Activated CD4-positive, alpha-beta memory T cell treated with anti-CD3 and anti-CD28 coated beads for 36 hours (primary cell): ENCODE measurements at regions of chr3 and their contacts with region 1.

Region 1: GRCh38 chr3:27632431-27633223 is 89.5 kb downstream of the EOMES start:
- DNase-seq: peak; percentile 56
- H3K4me3 Mint-ChIP-seq: peak overlapping the region; percentile 83
- H3K27ac Mint-ChIP-seq: peak overlapping the region; percentile 85
- H3K4me1 Mint-ChIP-seq: peaks cover 44% of the 10 kb centered on the region
- H3K27me3 Mint-ChIP-seq: no peaks in the 10 kb centered on the region

Region 2: GRCh38 chr3:27454914-27455313 is 177.7 kb before region 1 on chr3:
- CTCF ChIA-PET with region 1: no interaction called
- POLR2A ChIA-PET with region 1: no interaction called
- intact Hi-C with region 1: loop called (anchors 5 kb)
- DNase-seq: no peak
- H3K4me3 Mint-ChIP-seq: peak overlapping the region; percentile 10
- H3K27ac Mint-ChIP-seq: peak overlapping the region; percentile 58
- H3K4me1 Mint-ChIP-seq: peaks cover 62% of the 10 kb centered on the region
- H3K27me3 Mint-ChIP-seq: no peaks in the 10 kb centered on the region

Region 3: GRCh38 chr3:27590437-27591298 is 42.0 kb before region 1 on chr3:
- CTCF ChIA-PET with region 1: interaction called, 15 read pairs
- POLR2A ChIA-PET with region 1: interaction called, 5 read pairs
- intact Hi-C with region 1: loop called (anchors 1 kb)
- DNase-seq: peak; percentile 13
- H3K4me3 Mint-ChIP-seq: no peak overlapping the region
- H3K27ac Mint-ChIP-seq: peak overlapping the region; percentile 62
- H3K4me1 Mint-ChIP-seq: peaks cover 25% of the 10 kb centered on the region
- H3K27me3 Mint-ChIP-seq: no peaks in the 10 kb centered on the region

Region 4: GRCh38 chr3:27659279-27660021 is 26.8 kb after region 1 on chr3:
- CTCF ChIA-PET with region 1: interaction called, 4 read pairs
- POLR2A ChIA-PET with region 1: no interaction called
- intact Hi-C with region 1: loop called (anchors 1 kb)
- DNase-seq: peak; percentile 56
- H3K4me3 Mint-ChIP-seq: no peak overlapping the region
- H3K27ac Mint-ChIP-seq: no peak overlapping the region
- H3K4me1 Mint-ChIP-seq: peaks cover 8% of the 10 kb centered on the region
- H3K27me3 Mint-ChIP-seq: no peaks in the 10 kb centered on the region